H1 (cell line): ENCODE measurements at regions of chr16 and their contacts with region 1.

Region 1: DNA sequence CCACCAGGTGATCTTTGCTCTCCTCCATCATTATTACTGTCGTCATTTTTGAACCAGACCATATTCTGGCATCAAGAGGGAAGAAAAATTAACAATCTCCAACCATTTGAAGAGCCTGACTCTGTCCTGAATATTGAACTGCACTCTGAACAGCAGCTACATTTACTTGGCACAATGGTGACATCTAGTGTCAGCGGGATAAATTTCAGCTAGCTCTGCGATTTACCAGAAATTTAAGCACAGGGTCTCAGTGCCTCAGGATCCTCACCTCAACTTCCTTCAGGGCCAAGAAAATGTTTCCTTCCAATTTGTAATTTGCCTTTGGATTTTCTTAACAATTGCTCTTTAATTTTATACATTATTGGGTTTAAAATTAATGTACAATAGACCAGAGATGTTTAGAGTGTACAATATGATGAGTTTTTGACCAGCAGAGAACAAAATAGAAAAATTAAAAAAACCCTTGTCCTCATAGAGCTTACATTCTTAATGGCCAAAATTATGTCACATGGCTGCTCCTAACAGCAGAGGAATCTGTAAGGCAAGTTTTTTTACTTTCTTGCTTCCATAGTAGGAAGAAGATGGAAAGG is 10.7 kb upstream of the ZNF19 start:
- DNase-seq: peak in 1 of 2 experiments; percentile 60
- H3K4me3 ChIP-seq: no peak overlapping the region
- H3K27ac ChIP-seq: no peak overlapping the region
- H3K4me1 ChIP-seq: no peaks in the 10 kb centered on the region
- H3K27me3 ChIP-seq: no peaks in the 10 kb centered on the region; a peak in 1 of 7 replicates
- CTCF ChIP-seq: peak in 2 of 3 experiments; percentile 81 to 83; a peak in 3 of 4 replicates
- EP300 ChIP-seq: no peak
- POLR2A ChIP-seq: no peak
- RAD21 ChIP-seq: peak; percentile 84 to 88

Region 2: DNA sequence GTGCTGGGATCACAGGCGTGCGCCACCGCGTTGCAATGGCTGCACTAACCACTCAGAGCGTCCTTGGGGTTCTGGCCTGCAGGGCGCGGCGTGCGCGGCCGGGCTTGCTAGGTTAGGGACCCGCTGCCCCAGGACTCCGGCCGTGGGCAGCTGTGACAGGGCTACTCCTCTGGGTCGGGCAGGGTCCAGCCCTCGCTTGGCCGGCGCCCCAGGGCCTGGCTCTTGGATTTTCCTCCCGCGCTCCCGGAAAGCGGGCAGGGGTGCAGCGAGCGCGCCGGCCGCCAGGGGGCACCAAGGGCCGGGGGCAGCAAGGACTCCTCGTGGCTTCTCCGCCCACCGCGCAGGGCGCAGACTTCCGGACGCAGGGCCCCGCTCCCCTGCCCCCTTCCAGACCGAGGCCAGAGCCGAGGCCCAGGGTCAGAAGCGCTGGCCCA is 58.5 kb before region 1 on chr16:
- CTCF ChIA-PET with region 1: interaction called, 12 read pairs
- POLR2A ChIA-PET with region 1: no interaction called
- DNase-seq: peak in 1 of 2 experiments; percentile 95
- H3K4me3 ChIP-seq: no peak overlapping the region
- H3K27ac ChIP-seq: no peak overlapping the region
- H3K4me1 ChIP-seq: no peaks in the 10 kb centered on the region; a peak in 1 of 7 replicates
- H3K27me3 ChIP-seq: no peaks in the 10 kb centered on the region
- CTCF ChIP-seq: peak; percentile 71 to 76 (median 74)
- EP300 ChIP-seq: no peak
- POLR2A ChIP-seq: no peak
- RAD21 ChIP-seq: peak; percentile 49 to 65

Region 3: GRCh38 chr16:71461686-71462648 is 37.9 kb before region 1 on chr16 and contains the start of gene ZNF23:
- CTCF ChIA-PET with region 1: interaction called, 22 read pairs
- POLR2A ChIA-PET with region 1: no interaction called
- DNase-seq: peak in 1 of 2 experiments; percentile 92
- H3K4me3 ChIP-seq: peak within 1 kb of the TSS; percentile 82 to 100 (median 98)
- H3K27ac ChIP-seq: peak within 1 kb of the TSS; percentile 90
- H3K4me1 ChIP-seq: peaks cover 0 to 2% (median 0%) of the 10 kb centered on the region in 4 experiments; a peak in 1 of 7 replicates
- H3K27me3 ChIP-seq: no peaks in the 10 kb centered on the region
- CTCF ChIP-seq: peak in 2 of 3 experiments; percentile 6 to 8; a peak in 1 of 4 replicates
- EP300 ChIP-seq: no peak
- POLR2A ChIP-seq: peak; percentile 93 to 96
- RAD21 ChIP-seq: peak in 1 of 2 experiments; percentile 7; a peak in 1 of 4 replicates
- total RNA-seq, gene ZNF23: 10.2 and 12.7 TPM in 2 replicates

Region 4: GRCh38 chr16:71484006-71484893 is 15.6 kb before region 1 on chr16:
- CTCF ChIA-PET with region 1: interaction called, 68 read pairs
- POLR2A ChIA-PET with region 1: interaction called, 3 read pairs
- DNase-seq: peak in 1 of 2 experiments; percentile 78
- H3K4me3 ChIP-seq: peak overlapping the region; percentile 53 to 82 (median 80)
- H3K27ac ChIP-seq: peak overlapping the region; percentile 97
- H3K4me1 ChIP-seq: no peaks in the 10 kb centered on the region
- H3K27me3 ChIP-seq: no peaks in the 10 kb centered on the region
- CTCF ChIP-seq: no peak
- EP300 ChIP-seq: no peak
- POLR2A ChIP-seq: peak; percentile 77 to 97
- RAD21 ChIP-seq: no peak; a peak in 1 of 4 replicates

Region 5: DNA sequence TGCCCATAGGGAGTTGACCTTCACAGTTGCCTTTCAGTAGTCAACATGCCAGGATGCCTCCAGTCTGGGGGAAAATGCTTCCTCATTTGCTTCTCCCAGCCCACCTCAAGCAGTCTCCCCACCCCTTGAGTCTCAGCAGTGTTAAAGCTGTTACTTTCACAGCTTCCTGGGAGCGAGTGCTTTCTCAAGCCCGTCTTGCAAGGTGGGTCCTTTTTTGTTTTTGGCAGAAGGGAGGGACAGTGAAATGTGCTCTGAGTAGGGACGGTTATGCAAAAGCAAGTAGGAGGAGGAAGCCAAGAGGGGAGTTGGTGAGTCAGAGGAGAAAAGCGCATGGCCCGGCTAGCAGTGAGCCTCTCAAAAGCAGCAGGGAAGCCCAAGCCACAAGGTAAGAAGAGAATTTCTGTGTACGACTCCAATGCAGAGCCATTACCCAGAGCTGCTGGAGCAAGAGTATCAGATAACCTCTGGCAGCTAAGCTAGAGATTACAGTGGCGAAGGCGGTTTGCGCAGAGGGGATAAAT is 26.3 kb after region 1 on chr16 and contains the start of gene CHST4:
- CTCF ChIA-PET with region 1: interaction called, 22 read pairs
- POLR2A ChIA-PET with region 1: interaction called, 3 read pairs
- DNase-seq: peak; percentile 66 to 82
- H3K4me3 ChIP-seq: peak within 1 kb of the TSS; percentile 25 to 60 (median 44)
- H3K27ac ChIP-seq: peak within 1 kb of the TSS; percentile 89
- H3K4me1 ChIP-seq: peaks cover 0 to 18% (median 13%) of the 10 kb centered on the region in 4 experiments; a peak in 4 of 7 replicates
- H3K27me3 ChIP-seq: no peaks in the 10 kb centered on the region
- CTCF ChIP-seq: no peak
- EP300 ChIP-seq: no peak
- POLR2A ChIP-seq: peak; percentile 68 to 92
- RAD21 ChIP-seq: no peak
- total RNA-seq, gene CHST4: 11.7 and 12.1 TPM in 2 replicates

Region 6: GRCh38 chr16:71537643-71538042 is 37.8 kb after region 1 on chr16:
- CTCF ChIA-PET with region 1: interaction called, 133 read pairs
- POLR2A ChIA-PET with region 1: no interaction called
- DNase-seq: peak in 1 of 2 experiments; percentile 76
- H3K4me3 ChIP-seq: no peak overlapping the region
- H3K27ac ChIP-seq: no peak overlapping the region
- H3K4me1 ChIP-seq: no peaks in the 10 kb centered on the region
- H3K27me3 ChIP-seq: no peaks in the 10 kb centered on the region
- CTCF ChIP-seq: peak; percentile 45 to 89 (median 84)
- EP300 ChIP-seq: no peak
- POLR2A ChIP-seq: no peak
- RAD21 ChIP-seq: peak; percentile 87 to 91

Region 7: GRCh38 chr16:71590584-71590983 is 90.7 kb after region 1 on chr16:
- CTCF ChIA-PET with region 1: no interaction called
- POLR2A ChIA-PET with region 1: no interaction called
- DNase-seq: no peak
- H3K4me3 ChIP-seq: no peak overlapping the region
- H3K27ac ChIP-seq: no peak overlapping the region
- H3K4me1 ChIP-seq: no peaks in the 10 kb centered on the region
- H3K27me3 ChIP-seq: no peaks in the 10 kb centered on the region; a peak in 1 of 7 replicates
- CTCF ChIP-seq: no peak
- EP300 ChIP-seq: no peak
- POLR2A ChIP-seq: no peak
- RAD21 ChIP-seq: no peak